AG04449 (cell line): ENCODE measurements at regions of chr3 and their contacts with region 1.

Region 1: DNA sequence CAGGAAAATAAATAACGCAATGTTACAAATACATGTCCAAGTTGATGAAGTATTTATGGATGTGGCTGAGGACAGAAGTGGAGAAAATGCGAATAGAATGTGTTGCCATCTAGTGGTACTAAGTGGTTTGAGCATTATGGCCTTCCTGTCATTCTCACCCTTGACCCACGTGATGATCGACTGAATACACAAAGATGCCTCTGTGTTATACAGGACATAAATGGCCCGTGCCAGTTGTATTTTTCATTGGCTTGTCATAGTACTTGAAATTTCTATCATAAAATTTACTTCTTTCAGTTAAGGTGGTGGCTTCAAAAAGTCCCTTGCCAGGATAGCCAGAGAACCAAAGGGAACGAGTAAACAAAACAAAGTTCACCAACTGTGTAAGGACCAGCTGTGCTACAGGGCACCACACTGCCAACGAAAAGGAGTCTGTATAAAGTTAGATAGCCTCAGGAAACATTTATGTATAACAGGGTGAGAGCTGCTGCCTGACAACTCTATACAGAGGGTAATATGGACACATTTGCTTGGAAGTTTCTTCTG is 103.7 kb downstream of the MYH15 start:
- DNase-seq: no peak
- H3K4me3 ChIP-seq: no peak overlapping the region
- CTCF ChIP-seq: peak; percentile 70

Region 2: GRCh38 chr3:107938143-107938542 is 468.6 kb before region 1 on chr3:
- CTCF ChIA-PET with region 1: interaction called, 13 read pairs
- POLR2A ChIA-PET with region 1: no interaction called
- DNase-seq: no peak
- H3K4me3 ChIP-seq: no peak overlapping the region
- CTCF ChIP-seq: no peak

Region 3: DNA sequence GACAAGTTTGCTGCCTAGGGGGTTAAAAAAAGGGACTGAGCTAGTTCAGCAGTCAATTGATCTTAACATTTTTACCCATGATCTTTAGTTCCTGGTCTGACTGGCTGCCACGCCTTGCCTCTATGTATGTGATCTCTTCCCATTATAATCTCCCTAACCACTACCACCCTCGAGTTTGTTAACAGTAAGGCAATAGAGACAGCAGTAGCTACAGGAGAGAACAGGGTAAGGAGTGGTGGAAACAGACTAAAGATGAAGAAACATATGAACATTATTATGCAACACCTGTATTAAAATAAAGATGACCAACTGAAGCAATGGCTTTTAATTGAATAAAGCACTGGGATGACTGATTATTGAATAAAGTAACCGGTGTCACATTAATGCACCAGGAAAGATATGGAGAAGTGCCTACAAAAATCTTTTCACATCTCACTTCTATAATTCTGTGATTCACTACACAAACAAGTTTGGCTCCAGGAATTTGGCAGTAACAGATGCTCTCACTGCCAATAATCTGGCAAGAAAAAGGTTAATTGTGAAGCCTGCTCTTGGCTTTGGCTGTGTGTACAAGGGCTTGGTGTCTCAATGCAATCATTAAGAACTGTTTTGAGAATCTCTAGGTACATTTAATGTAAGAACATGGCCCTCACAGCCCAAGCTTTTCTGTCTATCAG is 14.7 kb before region 1 on chr3:
- CTCF ChIA-PET with region 1: interaction called, 16 read pairs
- POLR2A ChIA-PET with region 1: no interaction called
- DNase-seq: no peak
- H3K4me3 ChIP-seq: no peak overlapping the region
- CTCF ChIP-seq: no peak